ENCODE measurements at regions of chr22 and their contacts with region 1.

Region 1: GRCh38 chr22:29553351-29554224 is at the start of gene THOC5:
- DNase-seq: peak; percentile 95 to 98
- ATAC-seq: peak; percentile 99 to 100 (median 99)
- H3K4me3 ChIP-seq: peak within 1 kb of the TSS; percentile 84
- H3K27ac ChIP-seq: peak within 1 kb of the TSS; percentile 90
- H3K4me1 ChIP-seq: peaks cover 8% of the 10 kb centered on the region
- H3K27me3 ChIP-seq: no peaks in the 10 kb centered on the region
- CTCF ChIP-seq: peak; percentile 70
- total RNA-seq, gene THOC5: 42.8 to 56.0 (median 47.5) TPM

Region 2: DNA sequence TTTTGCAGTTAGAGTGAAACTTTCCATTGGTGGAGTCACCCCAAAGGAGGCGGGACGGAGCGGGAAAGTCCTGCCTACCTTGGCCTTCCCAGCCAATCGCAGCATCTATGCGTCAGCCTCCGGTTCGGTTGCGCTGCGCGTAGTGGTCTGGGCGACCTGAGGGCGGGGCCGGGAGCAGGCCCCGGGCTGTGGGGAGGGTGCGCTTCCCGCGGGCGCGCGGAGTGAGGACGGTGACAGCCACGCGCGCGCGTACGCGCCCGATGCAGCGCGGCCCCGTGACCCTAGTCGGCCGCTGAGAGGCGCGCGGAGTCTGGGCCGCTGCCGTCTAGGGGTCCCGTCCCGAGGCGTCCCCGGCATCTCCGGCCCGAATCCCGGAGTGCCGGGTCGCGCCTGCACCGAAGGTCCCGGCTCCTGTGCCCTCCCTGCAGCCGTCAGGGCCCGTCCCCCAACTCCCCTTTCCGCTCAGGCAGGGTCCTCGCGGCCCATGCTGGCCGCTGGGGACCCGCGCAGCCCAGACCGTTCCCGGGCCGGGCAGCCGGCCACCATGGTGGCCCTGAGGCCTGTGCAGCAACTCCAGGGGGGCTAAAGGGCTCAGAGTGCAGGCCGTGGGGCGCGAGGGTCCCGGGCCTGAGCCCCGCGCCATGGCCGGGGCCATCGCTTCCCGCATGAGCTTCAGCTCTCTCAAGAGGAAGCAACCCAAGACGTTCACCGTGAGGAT is 49.9 kb after region 1 on chr22 and contains the start of gene NF2:
- intact Hi-C with region 1: loop called in 1 of 2 experiments (anchors 5 kb)
- DNase-seq: peak; percentile 99
- ATAC-seq: peak; percentile 98 to 99 (median 98)
- H3K4me3 ChIP-seq: peak within 1 kb of the TSS; percentile 72
- H3K27ac ChIP-seq: peak within 1 kb of the TSS; percentile 92
- H3K4me1 ChIP-seq: peaks cover 6% of the 10 kb centered on the region
- H3K27me3 ChIP-seq: no peaks in the 10 kb centered on the region
- CTCF ChIP-seq: peak; percentile 4
- total RNA-seq, gene NF2: 43.2 to 59.7 (median 46.7) TPM

Region 3: GRCh38 chr22:31504282-31504681 is 1950.7 kb after region 1 on chr22:
- intact Hi-C with region 1: no loop called
- DNase-seq: no peak
- ATAC-seq: peak in 1 of 4 donors; percentile 30
- H3K4me3 ChIP-seq: no peak overlapping the region
- H3K27ac ChIP-seq: no peak overlapping the region
- H3K4me1 ChIP-seq: no peaks in the 10 kb centered on the region
- H3K27me3 ChIP-seq: no peaks in the 10 kb centered on the region
- CTCF ChIP-seq: no peak

Measured in psoas muscle (tissue), 8 donors.